Esophagus squamous epithelium (tissue), 5 donors: ENCODE measurements at regions of chr7 and their contacts with region 1.

Region 1: GRCh38 chr7:151349507-151349853 is 7.9 kb downstream of the NUB1 start:
- DNase-seq: no peak
- H3K4me3 ChIP-seq: peak overlapping the region in 3 of 4 donors; percentile 38 to 59 (median 46)
- H3K27ac ChIP-seq: peak overlapping the region; percentile 64 to 87 (median 76)
- H3K4me1 ChIP-seq: peaks cover 7 to 38% (median 10%) of the 10 kb centered on the region in 3 donors
- H3K27me3 ChIP-seq: no peaks in the 10 kb centered on the region
- CTCF ChIP-seq: no peak
- POLR2A ChIP-seq: no peak

Region 2: DNA sequence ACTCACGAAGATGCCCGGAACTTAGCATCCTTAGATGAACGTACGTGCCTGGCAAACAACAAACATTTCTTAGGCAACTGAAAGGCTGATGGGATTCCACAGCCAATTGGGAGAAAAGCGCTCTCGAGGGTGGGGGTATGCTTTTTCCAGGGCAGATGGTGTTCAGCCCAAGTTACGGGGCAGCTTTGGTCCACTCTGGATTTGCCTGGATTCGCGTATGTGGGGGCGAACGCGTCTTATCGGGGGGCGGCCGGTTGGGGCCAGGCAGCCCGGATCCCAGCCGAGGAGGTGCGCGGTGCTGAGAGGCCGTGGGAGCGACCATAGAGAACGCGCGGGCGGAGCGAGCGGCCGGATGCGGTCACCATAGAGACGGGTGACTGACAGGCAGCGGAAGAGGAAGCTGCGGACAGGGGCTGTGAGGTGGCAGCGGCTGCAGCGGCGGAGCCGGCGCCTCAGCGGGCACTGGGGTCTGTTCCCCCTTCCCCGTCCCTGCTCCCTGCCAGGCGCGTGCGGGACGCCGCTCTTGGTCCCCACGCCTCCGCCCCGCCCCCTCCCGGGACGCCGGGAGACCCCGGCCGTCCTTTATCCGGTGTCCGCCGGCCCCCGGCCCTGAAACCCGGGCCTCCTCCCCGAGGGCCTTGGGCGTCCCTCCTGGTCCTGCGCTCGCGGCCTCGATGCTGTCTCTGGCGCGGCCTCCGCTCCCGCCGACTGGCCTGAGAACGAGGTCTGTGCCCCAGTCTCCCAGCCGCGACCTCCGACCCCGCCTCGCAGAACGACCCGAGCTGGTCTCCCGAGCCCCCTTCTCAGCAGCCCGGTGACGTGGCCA is 117.2 kb before region 1 on chr7 and contains the start of gene CHPF2:
- intact Hi-C with region 1: no loop called
- DNase-seq: peak; percentile 53
- H3K4me3 ChIP-seq: peak within 1 kb of the TSS; percentile 81 to 100 (median 94)
- H3K27ac ChIP-seq: peak within 1 kb of the TSS; percentile 85 to 90 (median 87)
- H3K4me1 ChIP-seq: peaks cover 23 to 50% (median 23%) of the 10 kb centered on the region in 3 donors
- H3K27me3 ChIP-seq: no peaks in the 10 kb centered on the region
- CTCF ChIP-seq: no peak
- POLR2A ChIP-seq: peak in 2 of 4 donors; percentile 74 to 88
- total RNA-seq, gene CHPF2: 21.8 to 23.5 (median 22.3) TPM

Region 3: GRCh38 chr7:151310578-151310977 is 38.9 kb before region 1 on chr7:
- intact Hi-C with region 1: loop called (anchors 5 kb)
- DNase-seq: no peak
- H3K4me3 ChIP-seq: no peak overlapping the region
- H3K27ac ChIP-seq: no peak overlapping the region
- H3K4me1 ChIP-seq: peaks cover 3 to 18% (median 3%) of the 10 kb centered on the region in 3 donors
- H3K27me3 ChIP-seq: peaks cover 0 to 23% (median 0%) of the 10 kb centered on the region in 4 donors
- CTCF ChIP-seq: peak in 3 of 6 experiments; percentile 30 to 38 (median 38)
- POLR2A ChIP-seq: no peak